Testis (tissue), 5 donors: ENCODE measurements at regions of chr6 and their contacts with region 1.

Region 1: DNA sequence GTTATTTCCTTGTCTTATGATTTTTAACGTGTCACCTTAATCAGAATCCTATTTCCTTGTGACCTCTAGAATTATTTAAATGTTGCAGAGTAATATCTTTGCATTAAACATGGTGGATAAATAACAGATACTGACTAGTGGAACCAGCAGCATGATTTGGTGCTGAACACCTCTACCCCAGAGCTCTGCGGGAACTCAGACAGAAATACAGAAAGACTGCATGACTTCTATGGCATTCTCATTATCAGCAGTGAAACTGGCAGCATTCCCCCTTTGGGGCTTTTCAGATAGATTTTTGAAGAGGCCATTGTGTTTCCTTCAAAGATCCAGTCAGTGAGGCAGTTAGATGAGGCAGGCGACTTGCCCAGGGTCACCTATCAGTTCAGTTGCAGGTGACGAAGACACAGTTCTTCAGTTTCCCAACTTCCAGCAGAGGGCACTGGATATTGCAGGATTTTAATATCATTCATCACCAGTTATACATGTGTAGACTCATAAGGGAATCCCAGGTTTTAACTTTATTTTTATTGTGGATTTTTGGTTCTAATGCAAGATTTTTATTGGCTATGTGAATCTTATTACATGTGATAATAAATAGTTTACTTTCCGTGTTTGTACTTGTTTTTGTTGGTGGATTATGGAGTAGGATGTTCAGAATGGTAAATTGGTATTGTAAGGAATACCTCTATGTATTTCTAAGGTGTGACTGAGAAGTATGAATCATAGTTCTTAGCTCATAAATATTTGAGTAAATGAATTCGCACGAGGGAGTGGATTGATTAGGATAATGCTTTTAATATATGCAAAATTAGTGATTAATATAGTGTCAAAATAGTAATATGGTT is 81.3 kb downstream of the AFDN start:
- DNase-seq: peak; percentile 52
- H3K4me3 ChIP-seq: no peak overlapping the region
- H3K27ac ChIP-seq: no peak overlapping the region
- H3K4me1 ChIP-seq: peaks cover 3% of the 10 kb centered on the region
- H3K27me3 ChIP-seq: no peaks in the 10 kb centered on the region
- CTCF ChIP-seq: peak; percentile 3 to 38 (median 11)
- POLR2A ChIP-seq: no peak

Region 2: GRCh38 chr6:167396659-167397490 is 511.2 kb before region 1 on chr6:
- intact Hi-C with region 1: loop called (anchors 10 kb)
- DNase-seq: no peak
- H3K4me3 ChIP-seq: no peak overlapping the region
- H3K27ac ChIP-seq: no peak overlapping the region
- H3K4me1 ChIP-seq: no peaks in the 10 kb centered on the region
- H3K27me3 ChIP-seq: no peaks in the 10 kb centered on the region
- CTCF ChIP-seq: no peak
- POLR2A ChIP-seq: no peak

Region 3: GRCh38 chr6:168417191-168417590 is 509.1 kb after region 1 on chr6:
- intact Hi-C with region 1: no loop called
- DNase-seq: no peak
- H3K4me3 ChIP-seq: no peak overlapping the region
- H3K27ac ChIP-seq: peak overlapping the region; percentile 52 to 73
- H3K4me1 ChIP-seq: peaks cover 32% of the 10 kb centered on the region
- H3K27me3 ChIP-seq: no peaks in the 10 kb centered on the region
- CTCF ChIP-seq: no peak
- POLR2A ChIP-seq: no peak